Naive thymus-derived CD4-positive, alpha-beta T cell (primary cell): ENCODE measurements at regions of chr12 and their contacts with region 1.

Region 1: GRCh38 chr12:110431957-110432587 is 18.1 kb downstream of the ARPC3 start:
- DNase-seq: no peak
- ATAC-seq: no peak
- H3K4me3 ChIP-seq: no peak overlapping the region
- H3K4me3 Mint-ChIP-seq: peak overlapping the region in 4 of 10 donors; percentile 91 to 100 (median 96)
- H3K27ac ChIP-seq: no peak overlapping the region
- H3K27ac Mint-ChIP-seq: peak overlapping the region in 3 of 9 donors; percentile 96 to 99 (median 98)
- H3K4me1 ChIP-seq: no peaks in the 10 kb centered on the region
- H3K4me1 Mint-ChIP-seq: peaks cover 0 to 5% (median 0%) of the 10 kb centered on the region in 7 donors
- H3K27me3 ChIP-seq: no peaks in the 10 kb centered on the region
- H3K27me3 Mint-ChIP-seq: peaks cover 0 to 3% (median 0%) of the 10 kb centered on the region in 5 donors

Region 2: GRCh38 chr12:109255377-109255776 is 1176.7 kb before region 1 on chr12:
- CTCF ChIA-PET with region 1: no interaction called
- POLR2A ChIA-PET with region 1: no interaction called
- intact Hi-C with region 1: no loop called
- DNase-seq: no peak
- ATAC-seq: no peak
- H3K4me3 ChIP-seq: no peak overlapping the region
- H3K4me3 Mint-ChIP-seq: no peak overlapping the region
- H3K27ac ChIP-seq: no peak overlapping the region
- H3K27ac Mint-ChIP-seq: no peak overlapping the region
- H3K4me1 ChIP-seq: no peaks in the 10 kb centered on the region
- H3K4me1 Mint-ChIP-seq: peaks cover 0 to 6% (median 0%) of the 10 kb centered on the region in 7 donors
- H3K27me3 ChIP-seq: no peaks in the 10 kb centered on the region
- H3K27me3 Mint-ChIP-seq: no peaks in the 10 kb centered on the region

Region 3: DNA sequence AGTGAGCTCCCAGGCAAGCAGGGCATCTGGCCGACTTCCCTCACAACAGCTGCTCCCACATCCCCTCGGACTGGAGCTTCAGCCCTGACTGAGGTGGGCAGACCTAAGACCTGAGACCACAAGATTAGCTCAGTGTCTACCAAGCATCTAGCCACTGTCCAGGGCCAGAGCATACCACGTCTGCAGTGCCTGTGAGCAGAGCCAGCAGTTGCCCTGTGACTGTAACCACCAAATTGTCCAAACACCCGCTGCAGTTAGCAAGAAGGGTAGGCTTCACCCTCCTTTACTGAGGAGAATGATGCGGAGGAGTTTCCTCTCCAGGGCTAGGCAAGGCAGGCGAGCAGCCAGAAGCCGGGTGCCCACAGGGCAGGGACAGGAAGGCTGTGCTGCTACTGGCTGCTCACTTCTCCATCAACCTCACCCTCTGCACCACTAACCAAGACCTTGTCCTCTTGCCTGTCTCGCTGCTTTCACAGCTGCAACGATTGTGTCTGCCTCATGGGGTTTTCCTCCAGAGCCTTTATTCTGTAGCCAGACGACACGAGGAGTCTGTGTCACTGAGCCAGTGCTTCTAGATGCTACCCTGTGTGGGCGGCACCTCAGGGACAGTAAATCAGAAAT is 82.4 kb before region 1 on chr12:
- CTCF ChIA-PET with region 1: interaction called, 11 read pairs
- POLR2A ChIA-PET with region 1: no interaction called
- intact Hi-C with region 1: loop called (anchors 1 to 2 kb)
- DNase-seq: peak in 8 of 9 donors; percentile 47 to 71 (median 60)
- ATAC-seq: peak; percentile 91
- H3K4me3 ChIP-seq: peak overlapping the region; percentile 16
- H3K4me3 Mint-ChIP-seq: peak overlapping the region; percentile 23 to 91 (median 74)
- H3K27ac ChIP-seq: peak overlapping the region; percentile 66
- H3K27ac Mint-ChIP-seq: peak overlapping the region; percentile 77 to 92 (median 90)
- H3K4me1 ChIP-seq: peaks cover 0 to 23% of the 10 kb centered on the region in 2 donors
- H3K4me1 Mint-ChIP-seq: peaks cover 18 to 51% (median 41%) of the 10 kb centered on the region in 7 donors
- H3K27me3 ChIP-seq: no peaks in the 10 kb centered on the region
- H3K27me3 Mint-ChIP-seq: no peaks in the 10 kb centered on the region

Region 4: GRCh38 chr12:110355073-110355472 is 77.0 kb before region 1 on chr12:
- CTCF ChIA-PET with region 1: interaction called, 11 read pairs
- POLR2A ChIA-PET with region 1: no interaction called
- intact Hi-C with region 1: loop called (anchors 1 to 2 kb)
- DNase-seq: peak in 2 of 9 donors; percentile 5 to 29
- ATAC-seq: peak; percentile 58
- H3K4me3 ChIP-seq: no peak overlapping the region
- H3K4me3 Mint-ChIP-seq: no peak overlapping the region
- H3K27ac ChIP-seq: no peak overlapping the region
- H3K27ac Mint-ChIP-seq: peak overlapping the region in 2 of 9 donors; percentile 3 to 5
- H3K4me1 ChIP-seq: peaks cover 0 to 8% of the 10 kb centered on the region in 2 donors
- H3K4me1 Mint-ChIP-seq: peaks cover 13 to 27% (median 25%) of the 10 kb centered on the region in 7 donors
- H3K27me3 ChIP-seq: no peaks in the 10 kb centered on the region
- H3K27me3 Mint-ChIP-seq: no peaks in the 10 kb centered on the region